ENCODE measurements at regions of chr11 and their contacts with region 1.

Region 1: GRCh38 chr11:36746886-36747710 is 149.1 kb upstream of the RAG2 start:
- DNase-seq: peak; percentile 74

Region 2: GRCh38 chr11:36564376-36565030 is 182.6 kb before region 1 on chr11:
- CTCF ChIA-PET with region 1: interaction called, 64 read pairs
- POLR2A ChIA-PET with region 1: no interaction called
- DNase-seq: peak; percentile 50

Region 3: DNA sequence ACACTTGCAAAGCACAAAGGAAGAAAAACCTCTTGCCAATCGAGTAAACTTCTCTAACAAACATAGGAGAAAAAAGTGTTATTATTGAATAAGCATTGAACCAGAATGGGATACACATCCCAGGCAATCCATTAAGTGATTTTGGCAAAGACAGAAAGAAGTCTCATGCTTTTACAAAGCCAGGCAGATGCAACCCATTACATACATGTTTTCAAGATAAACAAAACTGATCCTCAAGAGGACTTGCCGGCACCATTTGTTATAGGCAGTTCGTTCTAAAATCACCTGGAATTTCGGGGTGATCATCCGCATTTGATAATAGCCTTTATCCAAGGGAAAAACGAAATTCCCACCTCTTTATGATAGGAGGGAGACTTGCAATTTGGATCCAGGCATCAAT is 51.5 kb before region 1 on chr11:
- CTCF ChIA-PET with region 1: interaction called, 72 read pairs
- POLR2A ChIA-PET with region 1: no interaction called
- DNase-seq: no peak

Region 4: DNA sequence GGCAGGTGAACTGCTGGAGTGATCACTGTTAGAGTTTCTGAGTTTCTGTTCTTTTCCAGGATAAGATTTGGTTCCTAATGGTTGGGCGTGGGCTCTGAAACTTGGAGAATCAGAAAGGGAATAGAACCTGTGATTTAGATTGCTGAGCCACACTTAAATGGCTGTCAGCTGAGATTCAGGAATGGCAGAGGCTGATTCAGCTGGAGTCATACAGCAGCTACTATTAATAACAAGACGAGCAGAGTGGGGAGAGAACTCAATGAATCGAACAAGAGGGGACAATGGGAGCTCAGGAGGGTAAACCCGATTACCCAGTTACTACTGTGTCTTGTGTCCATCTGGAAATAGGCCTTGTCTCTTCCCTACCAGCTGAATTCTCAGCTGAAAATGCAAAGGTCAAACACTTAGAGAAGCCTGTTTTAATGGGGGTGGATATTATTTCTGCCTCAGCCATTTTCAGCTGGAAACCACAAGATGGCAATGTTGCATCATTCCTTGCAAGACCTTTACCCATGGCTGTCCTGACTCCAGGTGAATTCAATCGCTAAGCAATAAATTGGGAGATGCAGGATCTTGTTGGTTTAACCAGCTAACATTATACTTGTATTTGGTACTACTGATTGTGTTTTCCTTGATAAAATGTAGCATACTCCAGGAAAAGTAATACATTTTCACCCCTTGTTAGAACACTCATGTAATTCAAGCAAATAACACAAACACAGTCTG is 44.6 kb before region 1 on chr11:
- CTCF ChIA-PET with region 1: interaction called, 72 read pairs
- POLR2A ChIA-PET with region 1: interaction called, 4 read pairs
- DNase-seq: peak; percentile 72

Region 5: DNA sequence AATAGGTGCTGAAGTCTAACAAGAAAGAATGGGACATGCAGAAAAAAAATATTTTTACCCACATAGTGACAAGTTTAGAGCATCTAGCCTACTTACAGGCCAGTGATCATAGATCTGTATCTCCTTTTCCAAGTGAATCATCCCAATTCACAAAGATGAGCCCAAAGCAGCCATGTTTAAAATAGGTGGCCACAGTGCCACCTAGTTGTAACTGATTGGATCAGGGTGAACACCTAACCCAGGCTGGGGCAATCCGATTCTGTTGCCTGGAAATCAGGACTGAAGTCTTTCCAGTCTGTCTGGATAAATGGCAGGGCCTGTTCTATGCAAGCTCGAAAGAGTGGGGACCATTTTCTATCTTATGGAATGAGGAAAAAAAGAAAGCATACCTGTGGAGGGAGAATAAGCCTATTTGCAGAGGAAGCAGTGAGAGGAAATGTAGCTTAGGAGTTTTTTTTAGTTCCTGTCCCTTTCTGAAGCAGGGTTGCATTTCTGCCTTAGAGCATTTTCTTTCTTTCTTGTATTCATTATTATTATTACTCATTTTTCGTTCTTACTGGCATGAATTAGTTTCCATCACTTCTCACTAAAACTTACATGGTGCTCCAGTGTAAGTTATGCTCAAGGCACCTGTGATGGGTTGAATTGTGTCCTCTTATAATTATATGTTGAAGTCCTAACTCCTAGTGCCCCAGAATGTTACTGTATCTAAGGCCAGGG is 35.8 kb before region 1 on chr11:
- CTCF ChIA-PET with region 1: interaction called, 15 read pairs
- POLR2A ChIA-PET with region 1: no interaction called
- DNase-seq: no peak